ENCODE measurements at regions of chr20 and their contacts with region 1.

Region 1: DNA sequence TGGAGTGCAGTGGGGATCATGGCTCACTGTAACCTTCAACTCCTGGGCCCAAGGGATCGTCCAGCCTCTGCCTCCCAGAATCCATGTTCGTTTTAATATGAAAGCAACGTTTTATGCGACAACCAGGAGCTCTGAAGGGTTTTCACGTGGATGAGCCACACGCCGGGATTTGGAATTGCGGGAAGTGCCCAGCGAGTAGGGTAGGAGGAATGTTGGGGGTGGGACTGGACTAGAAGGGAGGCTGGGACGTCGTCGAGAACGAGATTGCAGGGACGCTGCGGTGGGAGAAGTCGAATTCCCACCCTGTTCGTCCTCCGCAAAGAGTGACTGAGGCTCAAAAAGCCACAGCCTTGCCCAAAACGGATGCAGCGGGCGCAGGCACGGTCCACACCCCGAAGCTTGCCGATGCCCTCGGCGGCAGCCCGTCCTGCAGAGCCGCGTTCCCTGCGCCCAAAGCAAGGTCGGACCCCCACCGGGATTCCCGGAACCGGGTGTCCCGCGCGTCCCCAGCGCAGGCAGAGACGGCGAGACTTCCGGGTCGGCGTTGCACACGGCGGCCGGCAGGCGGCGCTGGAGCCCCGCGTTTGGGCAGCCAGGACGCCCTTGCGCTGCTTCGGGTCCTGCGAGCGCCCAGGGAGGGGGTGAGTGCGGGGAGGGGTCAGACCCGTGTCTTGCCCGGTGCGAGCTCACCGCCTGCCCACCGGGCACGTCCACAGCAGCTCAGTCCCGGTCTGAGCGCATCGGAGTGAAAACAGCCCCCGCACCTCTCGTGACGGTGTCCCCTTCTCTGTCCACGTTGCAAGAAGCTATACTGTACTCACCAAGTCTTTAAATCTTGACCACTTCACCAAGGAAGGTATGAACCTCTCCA is 87.8 kb downstream of the DHX35 start:
- DNase-seq: peak; percentile 88
- ATAC-seq: peak; percentile 85

Region 2: DNA sequence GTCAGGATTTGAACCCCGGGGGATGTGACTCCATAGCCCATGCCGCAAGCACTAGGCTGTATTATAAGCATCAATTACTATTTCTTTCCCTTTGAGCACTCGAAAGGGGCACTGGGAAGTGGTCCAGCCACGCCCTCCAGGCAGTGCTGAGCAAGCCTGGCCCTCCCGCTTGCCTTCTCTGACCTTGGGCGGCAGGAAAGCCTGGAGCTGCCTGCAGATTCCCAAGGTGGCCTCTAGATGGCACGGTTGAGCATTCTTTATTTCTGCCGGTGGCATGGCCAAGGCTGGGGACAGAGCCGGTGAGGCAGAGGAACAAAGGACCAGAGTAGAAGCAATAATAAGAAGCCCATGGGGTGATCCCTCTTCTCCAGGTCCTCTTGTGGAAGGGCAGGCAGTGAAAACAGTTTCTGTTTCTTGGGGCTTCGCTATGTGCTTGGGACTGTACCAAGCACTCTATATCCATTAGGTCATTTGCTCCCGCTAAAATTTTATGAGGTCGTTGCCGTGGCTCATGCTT is 416.3 kb before region 1 on chr20:
- intact Hi-C with region 1: no loop called
- DNase-seq: no peak
- ATAC-seq: peak; percentile 13

Region 3: DNA sequence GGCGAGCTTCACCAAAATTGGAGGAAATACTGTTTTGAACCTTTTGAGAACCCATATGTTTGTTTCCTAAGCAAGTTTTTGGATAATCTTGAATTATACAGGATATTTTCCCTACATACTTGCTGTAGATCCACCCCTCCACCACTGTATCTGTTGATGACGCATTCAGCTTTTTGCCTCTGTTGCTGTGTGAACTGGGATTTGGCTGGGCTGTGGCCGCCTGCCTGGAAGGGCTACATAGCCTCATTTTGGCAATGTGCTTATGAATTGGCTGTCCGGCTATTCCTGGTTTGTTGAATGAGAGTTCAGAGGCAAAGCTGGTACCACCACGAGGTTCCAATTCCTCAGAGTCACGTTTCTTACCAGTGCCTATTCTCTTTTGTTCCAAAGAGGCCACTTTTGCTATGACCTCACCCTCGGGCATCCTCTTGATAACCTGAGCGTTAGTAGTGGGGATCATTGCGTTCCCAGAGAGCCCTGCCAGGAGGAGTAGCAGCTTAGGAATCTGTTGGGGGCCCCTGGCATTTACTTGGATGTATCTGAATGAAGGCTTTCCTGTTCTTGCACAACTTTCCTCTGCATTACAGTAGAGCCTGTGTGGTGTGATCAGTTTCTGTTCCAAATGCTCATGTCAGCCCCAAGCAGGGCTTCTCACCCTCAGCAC is 117.3 kb before region 1 on chr20:
- intact Hi-C with region 1: loop called (anchors 5 kb)
- DNase-seq: no peak
- ATAC-seq: peak; percentile 48

Region 4: GRCh38 chr20:39081255-39081654 is 31.3 kb after region 1 on chr20:
- intact Hi-C with region 1: loop called (anchors 1 kb)
- DNase-seq: no peak
- ATAC-seq: peak; percentile 79

Region 5: GRCh38 chr20:39298571-39299506 is 248.9 kb after region 1 on chr20:
- intact Hi-C with region 1: no loop called
- DNase-seq: no peak
- ATAC-seq: no peak